Body of pancreas (tissue), 4 donors: ENCODE measurements at regions of chrX and their contacts with region 1.

Region 1: DNA sequence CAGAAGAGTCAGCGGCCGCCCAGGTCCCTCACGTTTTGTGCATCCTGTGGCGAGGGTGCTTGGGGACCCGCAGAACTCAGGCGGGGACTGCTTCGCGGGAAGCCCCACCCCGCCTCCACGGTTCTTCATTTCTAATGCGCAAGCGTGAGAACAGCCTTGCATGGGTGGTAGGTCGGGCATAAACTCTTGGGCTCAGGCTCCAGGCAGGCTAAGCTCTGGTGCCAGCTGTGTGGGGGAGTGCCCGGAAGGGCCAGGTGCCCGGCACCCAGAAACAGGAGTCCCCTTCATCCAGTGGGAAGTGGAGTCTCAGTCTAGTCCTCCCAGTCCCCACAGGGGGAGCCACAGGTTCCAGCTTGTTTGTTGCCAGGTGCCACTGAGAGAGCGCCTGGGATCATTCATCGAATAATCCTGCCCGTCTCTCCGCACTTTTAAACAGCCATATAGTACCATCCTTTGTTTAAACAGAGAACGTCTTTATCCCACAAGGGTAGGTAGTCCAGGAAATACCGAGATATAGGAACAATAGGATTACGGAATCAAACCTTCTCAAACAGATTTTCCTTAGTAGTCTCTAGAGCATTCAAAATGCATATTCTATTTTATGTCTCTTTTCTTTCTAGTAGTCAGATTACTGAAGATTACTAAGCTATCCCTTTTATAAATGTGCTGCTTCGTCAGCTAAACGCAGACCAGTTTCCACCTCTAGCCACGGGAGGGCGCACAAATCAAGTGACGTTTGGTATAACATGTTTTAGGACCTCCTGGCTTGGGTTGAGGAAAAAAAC is 12.7 kb upstream of the RBBP7 start:
- DNase-seq: peak; percentile 69 to 81 (median 72)
- ATAC-seq: peak; percentile 83
- H3K4me3 ChIP-seq: no peak overlapping the region
- H3K27ac ChIP-seq: peak overlapping the region; percentile 35 to 81 (median 73)
- H3K4me1 ChIP-seq: peaks cover 4% of the 10 kb centered on the region
- H3K27me3 ChIP-seq: no peaks in the 10 kb centered on the region
- CTCF ChIP-seq: peak in 6 of 7 experiments; percentile 30 to 60 (median 58)
- POLR2A ChIP-seq: peak in 2 of 3 donors; percentile 34 to 40

Region 2: GRCh38 chrX:17046478-17047097 is 163.7 kb after region 1 on chrX:
- intact Hi-C with region 1: loop called (anchors 10 kb)
- DNase-seq: peak; percentile 71 to 84 (median 78)
- ATAC-seq: peak; percentile 87
- H3K4me3 ChIP-seq: no peak overlapping the region
- H3K27ac ChIP-seq: no peak overlapping the region
- H3K4me1 ChIP-seq: no peaks in the 10 kb centered on the region
- H3K27me3 ChIP-seq: no peaks in the 10 kb centered on the region
- CTCF ChIP-seq: peak; percentile 48 to 89 (median 79)
- POLR2A ChIP-seq: no peak